Left lung (tissue), 14 donors: ENCODE measurements at regions of chr1 and their contacts with region 1.

Region 1: DNA sequence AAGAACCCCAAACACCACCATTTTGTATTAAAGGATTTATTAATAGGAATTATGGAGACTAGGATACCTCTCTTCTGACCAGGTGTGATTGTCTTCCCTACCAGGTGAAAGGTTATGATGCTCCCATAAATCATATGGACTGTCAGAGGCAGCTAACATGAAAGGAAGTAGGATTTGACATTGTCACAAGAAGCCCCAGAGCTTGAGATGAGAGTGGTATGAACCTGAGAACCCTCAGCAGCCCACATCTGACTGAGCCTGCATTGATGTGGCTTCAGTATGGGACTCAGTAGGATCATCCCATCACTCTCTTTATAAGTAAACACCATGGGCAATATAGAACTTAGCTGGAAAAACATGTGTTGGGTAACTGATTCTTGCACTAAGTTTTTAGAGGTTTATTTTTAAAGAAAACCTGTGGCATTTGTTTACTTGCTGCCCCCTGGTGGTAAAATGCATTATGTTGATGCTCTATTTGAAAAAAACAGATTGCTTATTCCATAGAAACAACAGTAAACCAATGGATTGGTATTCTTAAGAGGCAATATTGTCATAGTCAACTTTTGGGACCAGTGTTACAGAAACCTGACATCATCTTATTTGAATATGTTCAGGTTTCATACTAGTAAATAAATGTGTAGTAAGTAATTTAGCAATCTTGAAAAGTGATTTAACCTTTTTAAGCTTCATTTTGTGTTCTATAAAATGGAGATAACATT is 16.6 kb upstream of the CACYBP start:
- DNase-seq: no peak
- ATAC-seq: peak; percentile 36
- H3K4me3 ChIP-seq: no peak overlapping the region
- H3K27ac ChIP-seq: no peak overlapping the region
- H3K4me1 ChIP-seq: no peaks in the 10 kb centered on the region
- H3K27me3 ChIP-seq: no peaks in the 10 kb centered on the region
- CTCF ChIP-seq: peak; percentile 56 to 71

Region 2: DNA sequence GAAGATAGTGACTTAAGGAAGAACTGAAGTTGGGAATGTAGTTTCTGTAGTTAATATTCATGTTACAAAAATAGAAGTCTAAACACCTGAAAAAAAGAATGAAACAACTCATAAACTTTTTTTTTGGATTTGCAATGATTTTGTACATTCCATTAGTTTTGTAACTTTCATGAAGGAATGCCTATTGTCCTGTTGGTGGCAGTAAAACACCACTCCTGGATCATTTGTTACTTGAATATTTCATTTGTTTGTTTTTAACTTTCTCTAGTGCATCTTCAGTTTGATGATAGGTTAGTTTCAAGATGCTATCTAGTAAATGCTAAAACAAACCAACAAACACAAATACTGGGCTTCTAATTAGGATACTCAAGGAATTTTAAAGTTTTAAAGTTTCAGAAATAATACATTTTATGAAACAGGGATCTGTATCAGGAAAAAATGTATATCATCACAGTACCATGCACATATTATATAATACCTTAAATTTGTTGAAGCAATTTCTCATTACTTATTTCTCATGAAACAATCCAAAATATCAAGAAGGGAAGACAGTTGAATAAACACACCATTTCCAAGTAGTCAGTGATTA is 213.1 kb before region 1 on chr1:
- intact Hi-C with region 1: loop called in 1 of 2 experiments (anchors 5 kb)
- DNase-seq: peak in 2 of 4 donors; percentile 30 to 69
- ATAC-seq: peak; percentile 88
- H3K4me3 ChIP-seq: no peak overlapping the region
- H3K27ac ChIP-seq: no peak overlapping the region
- H3K4me1 ChIP-seq: no peaks in the 10 kb centered on the region
- H3K27me3 ChIP-seq: no peaks in the 10 kb centered on the region
- CTCF ChIP-seq: peak; percentile 68

Region 3: GRCh38 chr1:174931214-174931613 is 51.9 kb before region 1 on chr1:
- intact Hi-C with region 1: no loop called
- DNase-seq: no peak
- ATAC-seq: no peak
- H3K4me3 ChIP-seq: no peak overlapping the region
- H3K27ac ChIP-seq: no peak overlapping the region
- H3K4me1 ChIP-seq: no peaks in the 10 kb centered on the region
- H3K27me3 ChIP-seq: no peaks in the 10 kb centered on the region
- CTCF ChIP-seq: no peak